Common myeloid progenitor, CD34-positive (primary cell): ENCODE measurements at regions of chr15 and their contacts with region 1.

Region 1: DNA sequence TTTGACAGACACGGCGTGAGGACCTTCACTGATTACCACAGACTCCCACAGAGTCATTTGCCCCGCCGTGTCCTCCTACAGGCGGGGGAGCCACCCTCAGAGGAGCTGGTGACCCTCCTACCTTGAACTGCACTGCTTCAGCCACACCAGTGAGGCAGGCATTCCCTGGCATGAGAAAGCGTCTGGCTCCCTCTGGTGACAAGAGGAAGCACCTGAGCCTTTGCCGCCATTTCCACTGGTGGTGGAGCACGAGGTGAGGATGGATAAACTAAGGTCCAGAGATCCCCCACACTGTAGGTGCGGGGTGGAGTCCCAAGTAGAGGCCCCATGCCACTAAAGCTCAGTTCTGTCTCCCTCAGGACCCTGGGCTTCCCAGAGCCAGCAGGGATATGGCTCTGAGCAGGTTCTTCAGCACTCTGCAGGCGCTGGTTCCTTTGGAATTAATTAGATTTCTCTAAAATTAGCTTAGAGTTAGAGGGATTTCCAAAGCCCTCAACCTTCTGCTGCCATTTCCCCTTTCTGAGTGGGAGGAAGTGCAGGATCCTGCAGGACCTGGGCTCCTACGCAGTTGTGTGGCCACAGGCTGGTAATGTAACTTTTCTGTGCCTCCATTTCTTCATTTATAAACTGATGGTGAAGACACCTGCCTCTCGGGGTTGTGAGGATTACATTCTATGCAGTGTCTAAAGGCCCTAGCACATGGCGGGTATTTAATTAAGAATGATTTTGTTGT is 224.0 kb downstream of the SLCO3A1 start:
- DNase-seq: peak; percentile 72 to 81 (median 80)
- H3K4me3 ChIP-seq: no peak overlapping the region
- H3K27ac ChIP-seq: no peak overlapping the region
- H3K4me1 ChIP-seq: peaks cover 6 to 62% (median 48%) of the 10 kb centered on the region in 4 experiments
- H3K27me3 ChIP-seq: no peaks in the 10 kb centered on the region

Region 2: GRCh38 chr15:91852741-91853510 is 224.6 kb before region 1 on chr15:
- CTCF ChIA-PET with region 1: interaction called, 54 read pairs
- POLR2A ChIA-PET with region 1: no interaction called
- DNase-seq: peak; percentile 75 to 85 (median 79)
- H3K4me3 ChIP-seq: peak overlapping the region; percentile 65 to 87 (median 76)
- H3K27ac ChIP-seq: peak overlapping the region; percentile 49 to 76
- H3K4me1 ChIP-seq: peaks cover 47 to 81% (median 71%) of the 10 kb centered on the region in 4 experiments
- H3K27me3 ChIP-seq: no peaks in the 10 kb centered on the region

Region 3: GRCh38 chr15:91942676-91943576 is 134.6 kb before region 1 on chr15:
- CTCF ChIA-PET with region 1: interaction called, 35 read pairs
- POLR2A ChIA-PET with region 1: no interaction called
- DNase-seq: peak; percentile 87 to 97 (median 96)
- H3K4me3 ChIP-seq: peak overlapping the region in 4 of 7 experiments; percentile 32 to 61 (median 42)
- H3K27ac ChIP-seq: peak overlapping the region in 1 of 2 experiments; percentile 60
- H3K4me1 ChIP-seq: peaks cover 13 to 76% (median 50%) of the 10 kb centered on the region in 4 experiments
- H3K27me3 ChIP-seq: no peaks in the 10 kb centered on the region

Region 4: DNA sequence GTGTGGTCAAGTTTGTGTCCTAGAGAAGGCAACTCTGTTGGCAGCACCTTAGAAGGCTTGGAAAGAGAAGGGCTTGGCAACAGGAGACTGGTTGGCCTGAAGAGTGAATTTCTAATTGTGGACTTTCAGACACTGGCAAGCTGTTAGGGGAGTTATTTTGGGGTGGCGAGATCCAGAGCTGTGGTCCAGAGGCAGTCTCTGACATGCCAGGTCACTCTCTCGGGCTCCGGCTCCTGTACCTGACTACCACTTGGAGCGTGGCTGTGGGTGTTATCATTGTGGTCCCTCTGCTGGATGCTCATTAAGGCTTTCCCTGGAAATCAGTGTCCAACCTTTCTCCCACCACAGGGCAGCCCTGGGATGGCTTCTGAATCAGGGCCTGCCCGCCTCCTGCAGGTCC is 15.0 kb before region 1 on chr15:
- CTCF ChIA-PET with region 1: interaction called, 22 read pairs
- POLR2A ChIA-PET with region 1: no interaction called
- DNase-seq: no peak
- H3K4me3 ChIP-seq: no peak overlapping the region
- H3K27ac ChIP-seq: no peak overlapping the region
- H3K4me1 ChIP-seq: peaks cover 0 to 1% (median 0%) of the 10 kb centered on the region in 4 experiments
- H3K27me3 ChIP-seq: no peaks in the 10 kb centered on the region